ENCODE measurements at regions of chr16 and their contacts with region 1.

Region 1: DNA sequence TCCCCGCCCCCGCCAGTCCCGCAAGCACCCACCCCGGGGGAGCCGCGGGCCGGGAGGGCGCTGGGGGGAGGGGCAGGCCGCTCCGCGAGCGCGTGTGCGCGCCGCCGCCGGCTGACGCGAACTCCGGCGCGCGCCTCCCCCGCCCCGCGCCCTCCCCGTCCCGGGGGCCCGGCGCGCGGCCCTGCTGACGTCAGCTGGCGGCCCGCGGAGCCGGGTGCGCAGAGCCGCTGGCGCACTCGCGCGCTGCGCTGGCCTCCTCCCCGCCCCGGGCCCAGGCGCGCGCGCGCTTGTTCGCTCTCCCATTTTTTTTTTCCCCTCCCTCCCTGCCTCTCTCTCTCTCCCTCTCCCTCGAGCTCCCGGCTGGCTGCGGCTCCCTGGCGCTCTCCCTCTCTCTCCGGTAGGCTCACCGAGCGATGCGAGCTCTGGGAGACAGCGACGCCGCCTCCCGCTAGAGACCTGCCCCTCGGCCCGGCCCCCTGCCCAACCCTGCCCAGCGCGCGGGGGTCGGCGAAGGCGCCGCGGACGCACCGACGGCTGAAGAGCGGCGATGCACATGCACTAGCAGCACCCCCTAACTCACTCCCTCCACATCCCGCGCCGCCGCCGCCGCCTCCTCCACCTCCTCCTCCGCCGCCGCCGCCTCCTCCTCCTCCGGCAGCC is at the start of gene GNAO1:
- DNase-seq: peak; percentile 41 to 92 (median 60)
- ATAC-seq: peak; percentile 76
- H3K4me3 ChIP-seq: peak within 1 kb of the TSS; percentile 43 to 65
- H3K4me3 Mint-ChIP-seq: peak within 1 kb of the TSS; percentile 82
- H3K27ac ChIP-seq: peak within 1 kb of the TSS in 1 of 2 experiments; percentile 56
- H3K27ac Mint-ChIP-seq: peak within 1 kb of the TSS; percentile 49
- H3K4me1 ChIP-seq: peaks cover 38% of the 10 kb centered on the region
- H3K4me1 Mint-ChIP-seq: peaks cover 27% of the 10 kb centered on the region
- H3K27me3 ChIP-seq: peaks cover 20 to 21% of the 10 kb centered on the region in 2 experiments
- H3K27me3 Mint-ChIP-seq: peaks cover 40% of the 10 kb centered on the region
- CTCF ChIP-seq: no peak
- total RNA-seq, gene GNAO1: 2.3 to 3.6 TPM

Region 2: GRCh38 chr16:54484700-54485099 is 1706.6 kb before region 1 on chr16:
- CTCF ChIA-PET with region 1: no interaction called
- POLR2A ChIA-PET with region 1: no interaction called
- intact Hi-C with region 1: no loop called
- DNase-seq: no peak
- ATAC-seq: no peak
- H3K4me3 ChIP-seq: no peak overlapping the region
- H3K4me3 Mint-ChIP-seq: no peak overlapping the region
- H3K27ac ChIP-seq: no peak overlapping the region
- H3K27ac Mint-ChIP-seq: no peak overlapping the region
- H3K4me1 ChIP-seq: no peaks in the 10 kb centered on the region
- H3K4me1 Mint-ChIP-seq: no peaks in the 10 kb centered on the region
- H3K27me3 ChIP-seq: no peaks in the 10 kb centered on the region
- H3K27me3 Mint-ChIP-seq: no peaks in the 10 kb centered on the region
- CTCF ChIP-seq: no peak

Region 3: GRCh38 chr16:54929090-54930004 is 1261.9 kb before region 1 on chr16:
- CTCF ChIA-PET with region 1: no interaction called
- POLR2A ChIA-PET with region 1: no interaction called
- intact Hi-C with region 1: loop called in 1 of 2 experiments (anchors 5 kb)
- DNase-seq: peak; percentile 82 to 95 (median 91)
- ATAC-seq: peak; percentile 96
- H3K4me3 ChIP-seq: peak overlapping the region; percentile 46 to 48
- H3K4me3 Mint-ChIP-seq: peak overlapping the region; percentile 90
- H3K27ac ChIP-seq: no peak overlapping the region
- H3K27ac Mint-ChIP-seq: peak overlapping the region; percentile 64
- H3K4me1 ChIP-seq: peaks cover 28% of the 10 kb centered on the region
- H3K4me1 Mint-ChIP-seq: peaks cover 33% of the 10 kb centered on the region
- H3K27me3 ChIP-seq: peaks cover 38 to 51% of the 10 kb centered on the region in 2 experiments
- H3K27me3 Mint-ChIP-seq: peaks cover 61% of the 10 kb centered on the region
- CTCF ChIP-seq: no peak

Region 4: GRCh38 chr16:54974367-54974766 is 1216.9 kb before region 1 on chr16:
- CTCF ChIA-PET with region 1: no interaction called
- POLR2A ChIA-PET with region 1: no interaction called
- intact Hi-C with region 1: no loop called
- DNase-seq: no peak
- ATAC-seq: no peak
- H3K4me3 ChIP-seq: no peak overlapping the region
- H3K4me3 Mint-ChIP-seq: no peak overlapping the region
- H3K27ac ChIP-seq: no peak overlapping the region
- H3K27ac Mint-ChIP-seq: no peak overlapping the region
- H3K4me1 ChIP-seq: no peaks in the 10 kb centered on the region
- H3K4me1 Mint-ChIP-seq: no peaks in the 10 kb centered on the region
- H3K27me3 ChIP-seq: no peaks in the 10 kb centered on the region
- H3K27me3 Mint-ChIP-seq: peaks cover 2% of the 10 kb centered on the region
- CTCF ChIP-seq: no peak

Measured in CD8-positive, alpha-beta T cell (primary cell).